ENCODE measurements at regions of chr11 and their contacts with region 1.

Region 1: GRCh38 chr11:9060700-9061111 is 30.7 kb downstream of the SCUBE2 start:
- DNase-seq: peak in 1 of 35 experiments; percentile 8
- ATAC-seq: no peak
- H3K4me3 ChIP-seq: no peak overlapping the region
- H3K4me3 Mint-ChIP-seq: no peak overlapping the region
- H3K27ac ChIP-seq: no peak overlapping the region
- H3K27ac Mint-ChIP-seq: no peak overlapping the region
- H3K4me1 ChIP-seq: no peaks in the 10 kb centered on the region
- H3K4me1 Mint-ChIP-seq: peaks cover 0 to 3% (median 0%) of the 10 kb centered on the region in 3 donors
- H3K27me3 ChIP-seq: peaks cover 0 to 5% of the 10 kb centered on the region in 2 experiments
- H3K27me3 Mint-ChIP-seq: peaks cover 0 to 6% of the 10 kb centered on the region in 2 donors

Region 2: DNA sequence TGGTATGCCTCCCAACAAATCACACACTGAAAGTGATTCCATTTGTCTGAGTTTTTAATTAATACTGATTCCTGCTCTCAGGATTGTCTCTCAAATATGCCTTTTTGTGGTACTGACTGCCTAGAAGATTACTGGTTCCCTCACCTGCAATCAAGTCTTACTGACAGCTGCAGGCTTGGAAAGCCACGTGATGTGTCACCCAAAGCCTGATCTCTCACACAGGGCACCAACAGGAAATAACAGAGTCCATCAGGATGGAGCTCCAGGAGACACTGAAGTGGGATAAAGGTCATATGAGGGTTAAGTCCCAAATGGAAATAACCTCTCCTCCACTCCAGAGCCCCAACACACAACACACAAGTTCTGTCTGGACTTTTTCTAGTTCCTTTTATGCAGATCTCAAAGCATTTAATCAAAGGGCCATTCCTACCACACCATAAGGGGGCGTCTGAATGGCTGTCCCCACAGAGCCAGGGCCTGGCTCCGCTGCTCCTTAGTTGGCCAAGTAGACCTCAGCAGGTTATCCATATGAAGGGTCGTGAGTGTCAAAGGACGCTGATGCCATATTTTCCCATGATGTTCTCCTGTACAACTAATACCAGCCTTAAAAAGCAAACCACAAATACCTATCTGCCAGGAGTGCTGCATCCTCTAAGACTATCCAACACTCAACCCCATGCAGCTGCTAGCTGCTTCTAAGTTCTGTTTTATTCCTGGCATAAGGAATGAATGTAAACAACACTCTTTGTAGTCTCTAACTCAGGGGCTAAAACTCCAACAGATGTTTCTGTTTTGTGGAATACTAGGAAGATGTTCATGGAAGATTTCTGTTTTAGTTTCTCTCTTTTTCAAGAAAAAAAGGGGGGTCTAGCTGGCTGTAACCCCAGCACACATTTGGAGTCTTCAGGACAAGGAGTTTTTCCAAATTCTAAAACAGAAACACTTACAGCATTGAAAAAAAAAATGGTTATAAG is 17.7 kb after region 1 on chr11:
- CTCF ChIA-PET with region 1: no interaction called
- POLR2A ChIA-PET with region 1: no interaction called
- DNase-seq: no peak
- ATAC-seq: no peak
- H3K4me3 ChIP-seq: no peak overlapping the region
- H3K4me3 Mint-ChIP-seq: no peak overlapping the region
- H3K27ac ChIP-seq: no peak overlapping the region
- H3K27ac Mint-ChIP-seq: no peak overlapping the region
- H3K4me1 ChIP-seq: no peaks in the 10 kb centered on the region
- H3K4me1 Mint-ChIP-seq: no peaks in the 10 kb centered on the region
- H3K27me3 ChIP-seq: peaks cover 0 to 23% of the 10 kb centered on the region in 2 experiments
- H3K27me3 Mint-ChIP-seq: peaks cover 3 to 21% of the 10 kb centered on the region in 2 donors

Region 3: DNA sequence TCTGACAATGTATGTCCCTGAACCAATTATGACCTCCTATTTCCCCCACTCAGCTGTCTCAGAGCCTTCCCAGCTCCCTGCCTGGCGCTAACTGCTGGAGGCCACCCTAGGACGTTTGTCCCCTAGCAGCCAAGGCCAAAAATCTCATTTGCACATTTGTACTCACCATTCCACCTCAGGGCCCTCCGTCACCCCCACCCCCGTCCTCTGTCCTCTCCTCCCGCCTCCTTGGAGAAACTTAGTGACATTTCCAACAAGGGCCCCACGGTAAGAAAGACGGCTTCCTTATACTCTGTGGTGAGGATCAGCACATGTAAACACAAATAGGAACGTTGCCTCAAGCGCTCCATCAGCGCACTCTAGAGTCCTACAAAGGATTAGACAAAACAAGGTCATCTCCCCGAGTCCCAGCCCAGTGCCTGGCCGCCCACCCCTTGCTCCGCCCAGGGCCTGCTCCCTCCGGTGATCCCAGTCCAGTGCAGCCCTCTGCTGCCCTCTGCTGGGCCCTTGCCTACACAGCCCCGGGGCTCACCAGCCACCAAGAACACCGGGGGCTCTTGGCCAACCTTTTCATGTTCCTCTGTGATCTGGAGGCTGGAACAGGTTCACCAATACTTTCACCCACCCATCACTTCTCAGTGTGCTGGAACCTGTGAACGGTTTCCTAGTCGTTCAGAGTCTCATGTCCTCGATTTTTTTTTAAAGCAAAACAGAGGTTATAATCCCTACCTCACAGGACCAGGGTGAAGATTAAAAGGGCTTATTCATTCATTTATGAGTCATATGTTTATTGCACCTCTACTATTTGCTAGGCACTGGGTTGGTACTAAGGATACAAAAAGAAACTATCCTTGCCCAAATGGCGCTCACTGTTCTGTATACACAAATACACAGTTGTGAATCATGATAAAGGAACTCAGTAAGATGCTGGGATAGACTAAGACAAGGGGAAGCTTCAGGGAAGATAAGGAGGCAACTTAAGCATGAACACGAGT is 1675.1 kb after region 1 on chr11:
- CTCF ChIA-PET with region 1: interaction called in 1 of 2 experiments, 10 read pairs
- POLR2A ChIA-PET with region 1: no interaction called
- DNase-seq: peak; percentile 48 to 90 (median 78)
- ATAC-seq: peak; percentile 99 to 100 (median 99)
- H3K4me3 ChIP-seq: no peak overlapping the region
- H3K4me3 Mint-ChIP-seq: peak overlapping the region; percentile 28 to 52 (median 48)
- H3K27ac ChIP-seq: no peak overlapping the region
- H3K27ac Mint-ChIP-seq: peak overlapping the region; percentile 23 to 40
- H3K4me1 ChIP-seq: peaks cover 0 to 9% of the 10 kb centered on the region in 2 experiments
- H3K4me1 Mint-ChIP-seq: peaks cover 10 to 16% (median 10%) of the 10 kb centered on the region in 3 donors
- H3K27me3 ChIP-seq: peaks cover 0 to 3% of the 10 kb centered on the region in 2 experiments
- H3K27me3 Mint-ChIP-seq: no peaks in the 10 kb centered on the region

Measured in T-cell (primary cell).